Natural killer cell (primary cell): ENCODE measurements at regions of chr12 and their contacts with region 1.

Region 1: GRCh38 chr12:106357549-106358395 is at the start of gene POLR3B:
- DNase-seq: peak; percentile 94 to 98
- ATAC-seq: peak; percentile 91 to 97 (median 93)
- H3K4me3 ChIP-seq: peak within 1 kb of the TSS; percentile 95
- H3K4me3 Mint-ChIP-seq: peak within 1 kb of the TSS; percentile 89
- H3K27ac ChIP-seq: peak within 1 kb of the TSS; percentile 82
- H3K27ac Mint-ChIP-seq: peak within 1 kb of the TSS; percentile 71 to 93
- H3K4me1 ChIP-seq: peaks cover 8% of the 10 kb centered on the region
- H3K4me1 Mint-ChIP-seq: peaks cover 15 to 18% of the 10 kb centered on the region in 2 donors
- H3K27me3 ChIP-seq: no peaks in the 10 kb centered on the region
- H3K27me3 Mint-ChIP-seq: no peaks in the 10 kb centered on the region
- CTCF ChIP-seq: peak; percentile 84
- total RNA-seq, gene POLR3B: 3.8 to 8.1 (median 5.4) TPM

Region 2: DNA sequence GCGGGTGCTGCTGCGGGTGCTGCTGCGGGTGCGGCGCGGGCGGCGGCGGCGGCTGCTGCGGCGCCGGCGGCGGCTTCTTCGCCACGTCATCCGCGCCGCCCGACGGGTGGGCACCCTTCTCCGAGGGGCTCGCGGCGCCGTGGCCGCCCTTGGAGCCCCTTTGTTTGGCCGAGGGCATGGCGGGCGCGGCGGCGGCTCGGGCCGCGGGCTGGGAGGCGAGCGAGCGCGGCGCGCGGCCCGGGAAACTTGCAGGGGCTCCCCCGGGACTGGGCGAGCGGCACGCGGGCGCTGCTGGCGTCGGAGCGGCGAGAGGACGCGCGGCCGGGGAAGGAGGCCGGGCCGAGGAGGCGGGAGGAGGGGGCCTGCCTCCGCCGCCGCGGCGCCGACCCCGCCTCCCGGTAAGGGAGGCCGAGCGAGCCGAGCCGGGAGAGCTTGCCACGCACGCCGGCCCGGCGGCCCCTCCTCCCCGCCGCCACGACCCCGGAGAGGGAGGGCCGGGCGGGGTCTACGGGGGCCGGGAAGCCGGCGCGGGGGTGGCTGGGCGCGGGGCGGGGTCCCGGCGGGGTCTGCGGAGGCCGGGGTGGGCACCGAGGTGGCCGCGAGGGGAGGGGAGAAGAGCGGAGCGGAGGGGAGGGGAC is 110.0 kb before region 1 on chr12 and contains the start of gene CKAP4:
- intact Hi-C with region 1: loop called (anchors 5 kb)
- DNase-seq: peak; percentile 48 to 82
- ATAC-seq: peak; percentile 67 to 73 (median 73)
- H3K4me3 ChIP-seq: peak within 1 kb of the TSS; percentile 53
- H3K4me3 Mint-ChIP-seq: peak within 1 kb of the TSS; percentile 77
- H3K27ac ChIP-seq: peak within 1 kb of the TSS; percentile 80
- H3K27ac Mint-ChIP-seq: peak within 1 kb of the TSS; percentile 7 to 75
- H3K4me1 ChIP-seq: peaks cover 29% of the 10 kb centered on the region
- H3K4me1 Mint-ChIP-seq: peaks cover 0 to 9% of the 10 kb centered on the region in 2 donors
- H3K27me3 ChIP-seq: no peaks in the 10 kb centered on the region
- H3K27me3 Mint-ChIP-seq: peaks cover 5 to 6% of the 10 kb centered on the region in 2 donors
- CTCF ChIP-seq: no peak
- total RNA-seq, gene CKAP4: 2.0 to 19.4 (median 2.0) TPM

Region 3: DNA sequence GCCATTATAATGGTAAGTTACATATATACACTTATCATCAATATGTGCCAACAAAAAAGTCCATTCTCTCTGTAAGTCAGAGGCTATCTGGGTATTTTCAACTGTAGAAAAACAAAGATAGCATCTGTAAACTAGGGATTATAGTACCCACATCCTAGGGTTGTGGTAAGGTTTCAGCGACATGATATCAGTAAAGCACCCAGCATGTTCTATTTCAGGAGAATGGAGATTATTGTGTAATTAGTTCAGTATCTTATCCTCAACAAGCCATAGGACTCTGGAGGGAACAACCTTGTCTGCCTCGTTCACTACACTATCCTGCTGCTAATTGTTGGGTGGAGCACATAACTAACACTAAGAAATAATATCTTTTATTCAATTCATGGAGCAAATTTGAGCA is 90.2 kb before region 1 on chr12:
- intact Hi-C with region 1: no loop called
- DNase-seq: no peak
- ATAC-seq: peak in 1 of 3 donors; percentile 72
- H3K4me3 ChIP-seq: no peak overlapping the region
- H3K4me3 Mint-ChIP-seq: no peak overlapping the region
- H3K27ac ChIP-seq: no peak overlapping the region
- H3K27ac Mint-ChIP-seq: no peak overlapping the region
- H3K4me1 ChIP-seq: no peaks in the 10 kb centered on the region
- H3K4me1 Mint-ChIP-seq: no peaks in the 10 kb centered on the region
- H3K27me3 ChIP-seq: no peaks in the 10 kb centered on the region
- H3K27me3 Mint-ChIP-seq: peaks cover 19 to 32% of the 10 kb centered on the region in 2 donors
- CTCF ChIP-seq: no peak

Region 4: GRCh38 chr12:106302401-106303201 is 55.2 kb before region 1 on chr12 and contains the start of gene TCP11L2:
- intact Hi-C with region 1: loop called (anchors 1 kb)
- DNase-seq: peak; percentile 90 to 95
- ATAC-seq: peak; percentile 70 to 90 (median 72)
- H3K4me3 ChIP-seq: peak within 1 kb of the TSS; percentile 90
- H3K4me3 Mint-ChIP-seq: peak within 1 kb of the TSS; percentile 97
- H3K27ac ChIP-seq: peak within 1 kb of the TSS; percentile 94
- H3K27ac Mint-ChIP-seq: peak within 1 kb of the TSS; percentile 96 to 99
- H3K4me1 ChIP-seq: peaks cover 15% of the 10 kb centered on the region
- H3K4me1 Mint-ChIP-seq: peaks cover 47 to 52% of the 10 kb centered on the region in 2 donors
- H3K27me3 ChIP-seq: no peaks in the 10 kb centered on the region
- H3K27me3 Mint-ChIP-seq: no peaks in the 10 kb centered on the region
- CTCF ChIP-seq: no peak
- total RNA-seq, gene TCP11L2: 68.8 to 97.7 (median 71.1) TPM

Region 5: DNA sequence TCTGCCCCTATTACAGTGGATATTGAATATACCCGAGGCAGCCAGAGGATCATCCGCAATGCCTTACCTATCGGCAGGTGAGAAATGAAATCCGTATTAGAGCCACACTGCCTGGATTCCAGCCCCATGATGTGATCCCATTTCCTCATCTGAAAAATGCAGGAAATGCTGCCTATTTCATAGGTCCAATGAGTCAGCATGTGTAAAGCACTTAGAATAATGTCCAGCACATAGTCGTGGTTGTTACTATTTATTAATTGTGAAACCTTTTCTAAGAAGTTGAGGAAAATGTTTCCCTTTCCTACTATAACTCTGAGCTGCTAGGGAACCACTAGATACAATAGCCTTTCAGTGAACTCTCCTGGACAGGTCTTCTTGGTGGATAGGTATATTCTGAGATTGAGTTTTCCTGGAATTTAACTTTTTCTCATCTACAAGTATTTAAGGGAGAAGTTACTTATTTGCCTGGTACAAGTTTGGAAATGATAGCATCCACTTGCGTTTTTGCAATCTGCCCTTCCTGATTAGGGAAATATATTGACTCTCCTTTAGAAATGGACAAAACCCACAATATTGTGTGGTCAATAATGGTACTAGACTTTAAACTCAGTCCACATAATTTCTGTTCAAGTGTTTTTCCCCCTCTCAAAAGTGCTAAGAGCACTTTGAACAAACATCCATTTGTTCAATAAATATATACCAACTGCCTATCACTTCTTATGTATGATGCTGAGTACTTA is 12.0 kb after region 1 on chr12:
- intact Hi-C with region 1: no loop called
- DNase-seq: no peak
- ATAC-seq: no peak
- H3K4me3 ChIP-seq: no peak overlapping the region
- H3K4me3 Mint-ChIP-seq: no peak overlapping the region
- H3K27ac ChIP-seq: no peak overlapping the region
- H3K27ac Mint-ChIP-seq: no peak overlapping the region
- H3K4me1 ChIP-seq: no peaks in the 10 kb centered on the region
- H3K4me1 Mint-ChIP-seq: no peaks in the 10 kb centered on the region
- H3K27me3 ChIP-seq: no peaks in the 10 kb centered on the region
- H3K27me3 Mint-ChIP-seq: no peaks in the 10 kb centered on the region
- CTCF ChIP-seq: no peak

Region 6: DNA sequence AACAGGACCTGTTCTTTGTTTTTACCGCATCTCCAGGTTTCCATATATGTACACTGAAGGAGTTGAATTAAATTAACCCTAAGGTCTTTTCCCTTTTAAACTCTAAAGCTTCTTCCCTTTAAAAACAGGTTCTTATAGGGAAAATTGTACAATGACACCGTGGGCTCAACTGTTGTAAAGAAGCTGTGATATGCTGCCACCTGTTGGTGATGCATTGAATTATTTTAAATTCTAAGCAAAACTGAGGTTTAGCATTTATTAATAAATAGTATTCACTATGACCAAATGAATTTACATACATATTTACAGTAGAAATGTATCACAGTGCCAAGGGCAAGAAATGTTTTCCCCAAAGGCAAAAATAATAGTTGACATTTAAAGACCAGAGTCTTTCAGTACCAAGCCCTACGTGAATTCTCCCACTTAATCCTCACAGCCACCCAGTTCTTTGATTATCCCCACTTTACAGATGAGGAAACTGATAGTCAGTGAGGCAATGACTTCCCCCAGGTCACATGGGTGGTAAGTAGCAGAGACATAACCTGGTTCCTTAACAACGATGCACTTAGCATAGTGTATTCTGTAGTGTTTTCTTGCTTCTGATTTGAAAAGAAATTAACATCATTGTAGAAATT is 562.3 kb after region 1 on chr12:
- intact Hi-C with region 1: loop called (anchors 1 kb)
- DNase-seq: peak in 1 of 2 donors; percentile 74
- ATAC-seq: peak; percentile 44 to 55 (median 48)
- H3K4me3 ChIP-seq: no peak overlapping the region
- H3K4me3 Mint-ChIP-seq: no peak overlapping the region
- H3K27ac ChIP-seq: no peak overlapping the region
- H3K27ac Mint-ChIP-seq: no peak overlapping the region
- H3K4me1 ChIP-seq: peaks cover 1% of the 10 kb centered on the region
- H3K4me1 Mint-ChIP-seq: peaks cover 13 to 14% of the 10 kb centered on the region in 2 donors
- H3K27me3 ChIP-seq: peaks cover 5% of the 10 kb centered on the region
- H3K27me3 Mint-ChIP-seq: peaks cover 25 to 29% of the 10 kb centered on the region in 2 donors
- CTCF ChIP-seq: peak; percentile 89